Tibial artery (tissue), 4 donors: ENCODE measurements at regions of chr1 and their contacts with region 1.

Region 1: DNA sequence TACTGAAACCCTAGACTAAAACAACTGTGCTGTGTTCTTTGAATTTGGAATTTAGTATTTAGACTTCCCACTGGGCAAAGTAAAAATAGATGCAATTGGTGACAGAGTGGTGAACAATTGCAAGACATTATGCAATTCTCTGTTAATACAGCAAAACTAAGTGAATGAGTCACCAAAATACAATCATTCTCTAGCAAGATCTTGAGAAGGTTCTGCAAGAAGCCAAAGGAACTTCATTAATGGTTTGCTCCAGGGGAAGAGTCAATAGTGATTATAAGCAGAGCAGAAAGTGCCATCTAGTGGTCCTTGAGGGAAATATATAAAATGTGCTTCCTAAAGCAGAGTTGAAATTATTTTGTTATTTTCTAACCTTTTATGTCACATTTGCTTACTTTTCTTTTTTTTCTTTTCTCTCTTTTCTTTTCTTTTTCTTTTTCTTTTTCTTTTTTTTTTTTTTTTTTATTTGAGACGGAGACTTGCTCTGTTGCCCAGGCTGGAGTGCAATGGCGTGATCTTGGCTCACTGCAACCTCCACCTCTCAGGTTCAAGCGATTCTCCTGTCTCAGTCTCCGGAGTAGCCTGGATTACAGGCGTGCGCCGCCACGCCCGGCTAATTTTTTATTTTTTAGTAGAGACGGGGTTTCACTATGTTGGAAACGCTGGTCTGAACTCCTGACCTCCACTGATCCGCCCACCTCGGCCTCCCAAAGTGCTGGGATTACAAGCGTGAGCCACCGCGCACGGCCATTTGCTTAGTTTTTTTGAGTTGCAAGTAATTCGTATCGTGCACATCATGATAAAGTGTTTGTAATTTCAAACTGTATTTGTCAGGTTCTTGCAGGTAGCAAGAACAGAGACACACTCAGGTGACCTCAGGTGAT is 99.2 kb downstream of the CTH start:
- DNase-seq: no peak
- H3K4me3 ChIP-seq: no peak overlapping the region
- H3K27ac ChIP-seq: no peak overlapping the region
- H3K4me1 ChIP-seq: no peaks in the 10 kb centered on the region
- H3K27me3 ChIP-seq: no peaks in the 10 kb centered on the region
- CTCF ChIP-seq: peak; percentile 61 to 69

Region 2: DNA sequence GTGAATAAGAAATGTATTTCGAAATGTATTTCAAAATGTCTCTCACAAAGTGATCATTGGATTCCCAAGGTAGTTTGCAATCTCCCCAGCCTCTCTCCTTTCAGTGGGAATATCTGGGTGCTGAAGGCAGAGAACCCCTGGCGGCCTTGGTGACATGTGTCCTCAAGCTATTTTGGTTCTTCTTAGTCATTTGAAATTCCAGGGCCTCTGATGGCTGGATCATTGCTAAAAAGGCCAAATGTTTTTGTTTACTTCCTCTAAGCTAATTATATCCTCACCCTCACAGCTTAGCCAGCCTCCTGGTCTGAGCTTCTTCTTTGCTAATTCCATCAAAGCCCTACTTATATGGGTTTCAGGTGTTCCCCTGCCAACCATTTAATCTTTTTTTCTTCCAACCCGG is 376.1 kb before region 1 on chr1:
- intact Hi-C with region 1: loop called (anchors 5 kb)
- DNase-seq: no peak
- H3K4me3 ChIP-seq: no peak overlapping the region
- H3K27ac ChIP-seq: no peak overlapping the region
- H3K4me1 ChIP-seq: peaks cover 0 to 3% (median 0%) of the 10 kb centered on the region in 4 donors
- H3K27me3 ChIP-seq: no peaks in the 10 kb centered on the region
- CTCF ChIP-seq: no peak

Region 3: GRCh38 chr1:70164350-70164749 is 345.9 kb before region 1 on chr1:
- intact Hi-C with region 1: no loop called
- DNase-seq: no peak
- H3K4me3 ChIP-seq: no peak overlapping the region
- H3K27ac ChIP-seq: no peak overlapping the region
- H3K4me1 ChIP-seq: no peaks in the 10 kb centered on the region
- H3K27me3 ChIP-seq: no peaks in the 10 kb centered on the region
- CTCF ChIP-seq: no peak

Region 4: DNA sequence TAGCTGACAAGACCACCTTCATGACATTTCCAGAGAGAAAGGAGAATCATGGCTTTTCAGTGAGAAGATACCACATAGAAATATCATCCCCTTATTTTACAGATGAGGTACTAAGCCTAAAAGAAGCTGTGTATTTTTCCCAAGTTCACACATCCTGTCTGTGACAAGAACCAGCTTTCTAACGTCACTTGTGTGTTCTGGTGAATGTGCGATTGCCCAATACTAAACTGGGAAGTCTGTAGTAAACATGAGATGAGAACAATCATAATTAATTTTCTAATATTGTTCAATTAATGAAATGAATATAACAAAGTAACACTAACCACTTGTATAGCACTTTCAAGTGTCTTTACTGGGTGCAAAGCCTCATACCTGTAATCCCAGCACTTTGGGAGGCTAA is 491.4 kb after region 1 on chr1:
- intact Hi-C with region 1: no loop called
- DNase-seq: no peak
- H3K4me3 ChIP-seq: no peak overlapping the region
- H3K27ac ChIP-seq: no peak overlapping the region
- H3K4me1 ChIP-seq: peaks cover 0 to 27% (median 3%) of the 10 kb centered on the region in 4 donors
- H3K27me3 ChIP-seq: no peaks in the 10 kb centered on the region
- CTCF ChIP-seq: no peak